ENCODE measurements at regions of chr6 and their contacts with region 1.

Region 1: GRCh38 chr6:53593001-53593488 is 48.1 kb upstream of the GCLC start:
- DNase-seq: no peak
- ATAC-seq: no peak
- H3K4me3 Mint-ChIP-seq: no peak overlapping the region
- H3K27ac Mint-ChIP-seq: no peak overlapping the region
- H3K4me1 Mint-ChIP-seq: peaks cover 11% of the 10 kb centered on the region
- H3K27me3 Mint-ChIP-seq: peaks cover 5% of the 10 kb centered on the region

Region 2: DNA sequence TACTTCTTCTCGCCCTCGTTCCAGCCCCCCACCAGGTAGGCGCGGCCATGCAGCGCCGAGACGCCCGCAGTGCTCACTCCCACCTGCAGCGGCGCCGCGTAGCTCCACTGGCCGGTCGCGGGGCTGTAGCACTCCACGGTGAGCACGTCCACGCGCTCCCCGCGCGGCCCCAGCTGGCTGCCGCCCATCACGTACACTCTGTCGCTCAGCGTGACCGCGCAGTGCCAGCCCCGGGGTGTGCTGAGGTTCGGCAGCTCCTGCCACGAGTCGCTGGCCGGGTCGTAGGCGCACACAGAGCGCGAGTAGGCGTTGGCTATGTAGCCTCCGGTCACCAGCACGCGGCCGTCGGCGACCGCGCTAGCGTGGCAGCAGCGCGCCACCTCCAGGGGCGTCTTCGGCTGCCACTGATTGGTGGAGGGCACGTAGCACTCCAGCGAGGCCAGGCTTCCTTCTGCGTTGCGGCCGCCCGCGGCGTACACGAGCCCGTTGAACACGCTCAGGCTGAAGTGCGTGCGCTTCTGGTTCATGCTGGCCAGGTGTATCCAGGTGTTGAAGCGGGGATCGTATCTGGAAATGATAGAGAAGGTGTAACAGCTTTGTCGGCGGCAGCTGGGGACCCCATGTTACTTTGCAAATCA is 58.8 kb after region 1 on chr6:
- CTCF ChIA-PET with region 1: interaction called, 3 read pairs
- POLR2A ChIA-PET with region 1: no interaction called
- intact Hi-C with region 1: loop called in 1 of 2 experiments (anchors 5 kb)
- DNase-seq: peak; percentile 87
- ATAC-seq: peak; percentile 95
- H3K4me3 Mint-ChIP-seq: peak overlapping the region; percentile 81
- H3K27ac Mint-ChIP-seq: peak overlapping the region; percentile 82
- H3K4me1 Mint-ChIP-seq: peaks cover 28% of the 10 kb centered on the region
- H3K27me3 Mint-ChIP-seq: no peaks in the 10 kb centered on the region